Calu3 (cell line): ENCODE measurements at regions of chr5 and their contacts with region 1.

Region 1: DNA sequence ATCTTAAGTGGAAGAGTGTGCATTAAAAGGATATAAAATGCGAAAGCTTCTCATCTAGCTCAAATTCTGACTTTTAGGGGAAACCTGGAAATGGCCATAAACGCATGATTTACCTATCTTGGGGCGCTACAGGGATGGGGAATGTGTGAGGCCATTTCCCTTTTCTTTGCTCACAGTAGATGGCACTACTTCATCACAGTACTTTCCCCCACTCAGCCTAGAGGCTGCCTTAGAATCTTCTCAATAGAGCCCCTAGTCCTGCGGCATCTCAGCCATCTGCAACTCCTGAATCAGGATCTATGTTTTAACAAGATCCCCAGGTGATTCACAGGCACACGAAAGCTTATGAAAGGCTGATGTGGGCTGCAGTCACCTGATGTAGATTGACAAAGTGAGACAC is 110.8 kb downstream of the LHFPL2 start:
- DNase-seq: peak; percentile 42
- H3K4me3 Mint-ChIP-seq: no peak overlapping the region
- H3K27ac Mint-ChIP-seq: peak overlapping the region; percentile 25
- H3K4me1 Mint-ChIP-seq: peaks cover 13% of the 10 kb centered on the region
- H3K27me3 Mint-ChIP-seq: no peaks in the 10 kb centered on the region
- CTCF ChIP-seq: no peak

Region 2: DNA sequence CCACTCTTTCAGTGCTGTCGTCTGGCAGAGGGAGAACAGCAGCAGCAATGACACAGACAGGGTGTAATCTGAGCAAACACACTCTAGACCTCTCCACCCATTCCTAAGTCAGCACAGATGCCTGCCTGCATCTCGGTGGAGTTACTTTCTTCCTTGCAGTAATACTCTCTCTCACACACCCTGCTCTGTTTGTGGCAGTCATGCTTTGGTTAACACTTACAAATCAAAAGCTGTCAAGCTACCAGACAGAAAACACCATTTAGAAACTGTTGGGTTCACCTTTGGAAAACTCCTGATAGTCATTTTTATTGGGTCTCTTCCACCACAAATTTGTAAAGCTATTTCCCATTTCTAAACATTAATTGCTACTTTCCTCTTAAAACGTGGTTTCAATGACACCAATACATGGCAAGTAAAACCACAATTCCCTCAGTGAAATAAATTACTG is 83.5 kb after region 1 on chr5:
- CTCF ChIA-PET with region 1: no interaction called
- intact Hi-C with region 1: loop called (anchors 2 kb)
- DNase-seq: no peak
- H3K4me3 Mint-ChIP-seq: no peak overlapping the region
- H3K27ac Mint-ChIP-seq: peak overlapping the region; percentile 48
- H3K4me1 Mint-ChIP-seq: peaks cover 53% of the 10 kb centered on the region
- H3K27me3 Mint-ChIP-seq: no peaks in the 10 kb centered on the region
- CTCF ChIP-seq: no peak

Region 3: DNA sequence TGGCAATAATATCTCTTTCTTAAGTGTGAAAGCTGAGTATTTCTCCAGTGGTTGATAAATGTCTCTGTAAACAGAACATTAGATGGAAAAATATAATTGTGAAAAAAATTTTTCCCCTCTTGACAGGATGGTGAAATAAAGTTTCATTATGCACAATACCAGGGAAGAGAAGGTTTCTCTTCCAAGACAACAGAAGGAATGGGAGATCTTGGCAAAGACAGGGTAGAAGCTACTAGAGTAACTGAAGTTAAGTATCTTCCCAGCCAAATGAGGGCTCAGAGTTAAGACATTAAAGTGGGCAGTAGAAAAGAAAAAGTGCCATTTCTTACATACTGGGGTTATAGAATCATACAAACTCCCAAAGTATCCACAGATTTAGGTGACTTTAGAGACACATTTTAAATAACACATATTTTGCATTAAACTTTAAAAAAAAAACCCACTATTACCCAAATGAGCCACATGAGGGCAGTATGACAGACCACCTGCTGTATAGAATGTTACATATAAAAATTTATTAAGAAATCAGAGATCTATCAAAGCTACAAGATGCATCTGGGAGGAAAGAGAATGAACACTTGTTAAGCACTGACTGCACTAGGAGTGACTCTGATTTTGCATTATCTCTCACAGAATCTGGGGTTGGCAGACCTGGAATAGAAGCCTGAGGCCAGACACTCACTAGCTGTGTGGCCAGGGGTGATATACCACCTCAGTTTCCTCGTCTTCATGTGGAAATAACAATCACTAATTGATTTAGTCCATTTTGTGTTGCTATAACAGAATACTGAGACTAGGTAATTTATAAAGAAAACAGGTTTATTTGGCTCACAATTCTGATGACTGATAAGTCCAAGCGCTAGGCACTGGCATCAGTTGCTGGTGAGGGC is 348.8 kb after region 1 on chr5:
- CTCF ChIA-PET with region 1: no interaction called
- intact Hi-C with region 1: loop called (anchors 10 kb)
- DNase-seq: no peak
- H3K4me3 Mint-ChIP-seq: no peak overlapping the region
- H3K27ac Mint-ChIP-seq: no peak overlapping the region
- H3K4me1 Mint-ChIP-seq: no peaks in the 10 kb centered on the region
- H3K27me3 Mint-ChIP-seq: no peaks in the 10 kb centered on the region
- CTCF ChIP-seq: peak; percentile 74

Region 4: GRCh38 chr5:78964887-78965286 is 427.1 kb after region 1 on chr5:
- CTCF ChIA-PET with region 1: interaction called, 3 read pairs
- intact Hi-C with region 1: loop called (anchors 1 kb)
- DNase-seq: peak; percentile 27
- H3K4me3 Mint-ChIP-seq: no peak overlapping the region
- H3K27ac Mint-ChIP-seq: no peak overlapping the region
- H3K4me1 Mint-ChIP-seq: no peaks in the 10 kb centered on the region
- H3K27me3 Mint-ChIP-seq: no peaks in the 10 kb centered on the region
- CTCF ChIP-seq: no peak